ENCODE measurements at regions of chr3 and their contacts with region 1.

Region 1: DNA sequence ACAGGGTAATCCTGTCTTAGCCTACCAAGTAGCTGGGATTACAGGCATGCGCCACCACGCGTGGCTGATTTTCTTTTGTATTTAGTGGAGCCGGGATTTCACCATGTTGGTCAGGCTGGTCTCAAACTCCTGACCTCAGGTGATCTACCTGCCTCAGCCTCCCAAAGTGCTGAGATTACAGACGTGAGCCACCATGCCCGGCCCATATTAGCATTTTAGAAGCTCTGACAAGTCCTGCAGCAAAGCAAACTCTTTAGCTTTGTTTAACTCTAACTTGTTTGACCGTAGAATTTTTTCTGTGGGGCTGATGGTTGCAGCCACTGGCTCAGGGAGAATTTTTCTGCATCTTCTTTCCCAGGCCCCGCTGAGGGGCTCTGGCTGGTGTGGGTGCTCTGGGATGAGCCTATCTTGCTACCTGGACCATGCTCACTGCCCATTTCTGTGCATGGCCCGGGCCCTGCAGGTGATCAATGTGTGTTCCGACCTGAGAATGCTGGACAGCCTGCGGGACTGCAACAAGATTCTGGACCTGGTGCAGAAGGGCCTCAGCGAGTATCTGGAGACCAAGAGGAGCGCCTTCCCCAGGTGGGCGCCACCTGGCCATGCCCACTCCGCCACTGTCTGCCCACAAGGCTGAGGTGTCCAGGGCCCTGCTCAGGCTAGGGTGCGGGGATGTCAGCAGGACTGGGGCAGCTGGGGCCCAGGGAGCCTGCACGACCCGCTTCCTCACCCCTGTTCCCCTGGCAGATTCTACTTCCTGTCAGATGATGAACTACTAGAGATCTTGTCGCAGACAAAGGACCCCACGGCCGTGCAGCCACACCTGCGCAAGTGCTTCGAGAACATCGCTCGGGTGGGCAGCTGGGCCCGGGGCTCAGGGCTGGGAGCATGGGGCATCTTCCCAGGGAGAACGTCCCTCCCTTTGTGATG is 41.3 kb downstream of the DNAH1 start:
- DNase-seq: peak; percentile 2 to 44
- ATAC-seq: no peak
- H3K4me3 ChIP-seq: no peak overlapping the region
- H3K27ac ChIP-seq: no peak overlapping the region
- H3K4me1 ChIP-seq: no peaks in the 10 kb centered on the region
- H3K27me3 ChIP-seq: no peaks in the 10 kb centered on the region
- CTCF ChIP-seq: no peak

Region 2: DNA sequence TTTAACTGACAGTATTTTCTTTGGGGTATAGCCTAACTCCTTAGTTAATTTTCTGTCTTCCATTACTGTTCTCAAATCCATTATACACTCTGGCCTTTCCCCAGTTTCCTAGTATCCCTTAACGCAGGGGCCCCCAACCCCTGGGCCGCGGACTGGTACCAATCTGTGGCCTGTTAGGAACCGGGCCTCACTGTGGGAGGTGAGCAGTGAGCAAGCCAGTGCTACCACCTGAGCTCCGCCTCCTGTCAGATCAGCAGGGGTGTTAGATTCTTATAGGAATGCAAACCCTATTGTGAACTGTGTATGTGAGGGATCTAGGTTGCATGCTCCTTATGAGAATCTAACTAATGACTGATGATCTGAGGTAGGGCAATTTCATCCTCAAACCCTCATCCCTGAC is 1607.6 kb before region 1 on chr3:
- intact Hi-C with region 1: no loop called
- DNase-seq: no peak
- ATAC-seq: no peak
- H3K4me3 ChIP-seq: no peak overlapping the region
- H3K27ac ChIP-seq: no peak overlapping the region
- H3K4me1 ChIP-seq: no peaks in the 10 kb centered on the region
- H3K27me3 ChIP-seq: no peaks in the 10 kb centered on the region
- CTCF ChIP-seq: no peak

Region 3: DNA sequence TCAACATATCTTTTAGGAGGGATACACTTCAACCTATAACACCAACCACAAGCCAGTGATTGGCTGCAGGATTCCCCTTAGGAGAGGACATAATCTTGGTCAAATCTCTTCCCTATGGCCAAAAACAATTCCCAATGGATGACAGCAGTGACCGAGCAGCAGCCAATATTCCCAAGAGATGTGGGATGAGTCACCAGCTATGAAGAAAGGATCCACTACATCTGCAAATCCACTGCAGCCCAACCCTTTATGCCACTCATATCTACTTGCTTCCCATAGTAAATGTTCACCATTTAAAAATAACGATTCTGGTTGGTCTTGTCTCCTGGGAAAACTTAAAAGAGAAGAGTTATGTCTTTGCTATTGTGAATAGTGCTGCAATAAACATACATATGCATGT is 477.5 kb before region 1 on chr3:
- intact Hi-C with region 1: no loop called
- DNase-seq: no peak
- ATAC-seq: no peak
- H3K4me3 ChIP-seq: no peak overlapping the region
- H3K27ac ChIP-seq: no peak overlapping the region
- H3K4me1 ChIP-seq: no peaks in the 10 kb centered on the region
- H3K27me3 ChIP-seq: peaks cover 0 to 2% (median 0%) of the 10 kb centered on the region in 3 donors
- CTCF ChIP-seq: no peak

Region 4: GRCh38 chr3:52313774-52314188 is 43.6 kb before region 1 on chr3:
- intact Hi-C with region 1: loop called in 1 of 2 experiments (anchors 5 kb)
- DNase-seq: no peak
- ATAC-seq: peak in 3 of 4 donors; percentile 31 to 47 (median 42)
- H3K4me3 ChIP-seq: no peak overlapping the region
- H3K27ac ChIP-seq: no peak overlapping the region
- H3K4me1 ChIP-seq: peaks cover 6% of the 10 kb centered on the region
- H3K27me3 ChIP-seq: no peaks in the 10 kb centered on the region
- CTCF ChIP-seq: no peak

Measured in psoas muscle (tissue), 8 donors.